Endothelial cell of umbilical vein (primary cell): ENCODE measurements at regions of chr1 and their contacts with region 1.

Region 1: GRCh38 chr1:19390901-19391595 is 78.9 kb downstream of the SLC66A1 start:
- DNase-seq: peak; percentile 82
- H3K4me3 ChIP-seq: no peak overlapping the region
- H3K27ac ChIP-seq: peak overlapping the region; percentile 52
- H3K4me1 ChIP-seq: peaks cover 21% of the 10 kb centered on the region
- H3K27me3 ChIP-seq: no peaks in the 10 kb centered on the region
- CTCF ChIP-seq: peak; percentile 84 to 86
- POLR2A ChIP-seq: no peak

Region 2: GRCh38 chr1:19186001-19186400 is 205.0 kb before region 1 on chr1:
- CTCF ChIA-PET with region 1: no interaction called
- POLR2A ChIA-PET with region 1: no interaction called
- dilution Hi-C with region 1: no loop called
- intact Hi-C with region 1: no loop called
- DNase-seq: no peak
- H3K4me3 ChIP-seq: no peak overlapping the region
- H3K27ac ChIP-seq: no peak overlapping the region
- H3K4me1 ChIP-seq: peaks cover 6% of the 10 kb centered on the region
- H3K27me3 ChIP-seq: no peaks in the 10 kb centered on the region
- CTCF ChIP-seq: no peak
- POLR2A ChIP-seq: no peak

Region 3: GRCh38 chr1:19220991-19221390 is 170.1 kb before region 1 on chr1:
- CTCF ChIA-PET with region 1: no interaction called
- POLR2A ChIA-PET with region 1: no interaction called
- dilution Hi-C with region 1: no loop called
- intact Hi-C with region 1: no loop called
- DNase-seq: no peak
- H3K4me3 ChIP-seq: no peak overlapping the region
- H3K27ac ChIP-seq: no peak overlapping the region
- H3K4me1 ChIP-seq: no peaks in the 10 kb centered on the region
- H3K27me3 ChIP-seq: no peaks in the 10 kb centered on the region
- CTCF ChIP-seq: no peak
- POLR2A ChIP-seq: no peak

Region 4: GRCh38 chr1:19240673-19241538 is 150.1 kb before region 1 on chr1:
- CTCF ChIA-PET with region 1: no interaction called
- POLR2A ChIA-PET with region 1: no interaction called
- dilution Hi-C with region 1: no loop called
- intact Hi-C with region 1: no loop called
- DNase-seq: peak; percentile 54
- H3K4me3 ChIP-seq: no peak overlapping the region
- H3K27ac ChIP-seq: no peak overlapping the region
- H3K4me1 ChIP-seq: no peaks in the 10 kb centered on the region
- H3K27me3 ChIP-seq: no peaks in the 10 kb centered on the region
- CTCF ChIP-seq: peak; percentile 89
- POLR2A ChIP-seq: no peak

Region 5: DNA sequence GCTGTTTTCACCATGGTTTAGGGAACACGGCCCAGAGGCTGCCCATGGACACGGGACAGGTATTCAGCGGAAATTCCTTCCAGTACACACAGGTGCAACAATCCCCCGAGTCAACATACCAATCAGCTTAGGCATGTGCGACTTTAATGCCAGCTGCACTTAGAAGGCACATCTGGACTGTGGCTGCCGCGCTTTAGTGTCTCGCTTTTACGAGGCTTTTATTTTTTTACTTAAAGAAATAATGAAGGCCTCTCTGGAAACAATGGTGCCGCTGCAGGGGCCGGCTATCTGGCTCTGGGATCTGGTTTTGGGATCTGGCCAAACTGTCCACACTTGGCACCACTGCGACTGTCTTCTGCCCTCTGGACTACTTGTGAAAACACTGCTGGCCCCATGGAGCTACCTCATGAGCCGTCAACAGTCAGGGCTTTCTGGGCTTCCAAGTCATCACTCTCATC is 23.4 kb before region 1 on chr1:
- CTCF ChIA-PET with region 1: no interaction called
- POLR2A ChIA-PET with region 1: no interaction called
- dilution Hi-C with region 1: no loop called
- intact Hi-C with region 1: no loop called
- DNase-seq: peak; percentile 82
- H3K4me3 ChIP-seq: no peak overlapping the region
- H3K27ac ChIP-seq: no peak overlapping the region
- H3K4me1 ChIP-seq: no peaks in the 10 kb centered on the region
- H3K27me3 ChIP-seq: no peaks in the 10 kb centered on the region
- CTCF ChIP-seq: no peak
- POLR2A ChIP-seq: no peak

Region 6: DNA sequence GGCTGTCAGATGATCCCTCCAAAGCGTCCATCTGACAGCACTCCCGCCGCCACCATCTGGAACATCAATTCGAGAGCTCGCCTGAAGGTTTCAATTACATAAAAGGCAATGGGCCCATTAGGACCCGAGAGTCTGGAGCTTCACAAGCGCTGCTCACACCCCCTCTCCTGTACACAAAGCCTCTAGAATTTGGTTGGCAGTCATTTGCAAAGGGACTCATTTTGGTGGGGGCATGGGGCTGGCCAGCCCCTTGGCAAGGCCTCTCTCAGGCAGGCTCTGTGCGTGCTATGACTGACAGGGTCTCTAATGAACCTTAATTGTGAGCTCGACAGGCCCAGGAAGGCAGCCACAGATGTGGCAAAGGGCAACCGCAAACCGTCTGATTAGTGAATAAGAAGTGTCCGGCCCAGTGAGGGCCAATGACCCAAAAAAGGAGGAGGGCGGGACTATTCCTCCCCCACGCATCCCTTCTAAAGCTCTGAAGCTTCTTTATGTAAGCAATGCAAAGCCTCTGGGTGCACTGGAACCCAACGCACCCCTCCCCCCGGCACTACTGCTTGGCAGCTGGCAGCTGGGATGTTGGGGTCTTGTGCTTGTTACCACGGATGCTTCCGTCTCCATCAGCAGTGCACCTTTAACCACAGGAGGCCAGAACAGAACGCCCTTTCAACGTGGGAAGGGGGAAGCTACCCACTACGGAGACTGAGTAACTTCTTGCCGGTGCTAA is 14.9 kb after region 1 on chr1:
- CTCF ChIA-PET with region 1: interaction called, 18 read pairs
- POLR2A ChIA-PET with region 1: interaction called, 3 read pairs
- dilution Hi-C with region 1: no loop called
- intact Hi-C with region 1: no loop called
- DNase-seq: no peak
- H3K4me3 ChIP-seq: no peak overlapping the region
- H3K27ac ChIP-seq: no peak overlapping the region
- H3K4me1 ChIP-seq: no peaks in the 10 kb centered on the region
- H3K27me3 ChIP-seq: no peaks in the 10 kb centered on the region
- CTCF ChIP-seq: no peak
- POLR2A ChIP-seq: no peak

Region 7: GRCh38 chr1:19582302-19582701 is 191.3 kb after region 1 on chr1:
- CTCF ChIA-PET with region 1: interaction called, 6 read pairs
- POLR2A ChIA-PET with region 1: no interaction called
- dilution Hi-C with region 1: no loop called
- intact Hi-C with region 1: loop called (anchors 1 kb)
- DNase-seq: peak; percentile 44
- H3K4me3 ChIP-seq: no peak overlapping the region
- H3K27ac ChIP-seq: no peak overlapping the region
- H3K4me1 ChIP-seq: no peaks in the 10 kb centered on the region
- H3K27me3 ChIP-seq: peaks cover 2 to 5% of the 10 kb centered on the region in 2 experiments
- CTCF ChIP-seq: peak; percentile 65 to 72
- POLR2A ChIP-seq: no peak